MCF 10A (cell line): ENCODE measurements at regions of chr22 and their contacts with region 1.

Region 1: DNA sequence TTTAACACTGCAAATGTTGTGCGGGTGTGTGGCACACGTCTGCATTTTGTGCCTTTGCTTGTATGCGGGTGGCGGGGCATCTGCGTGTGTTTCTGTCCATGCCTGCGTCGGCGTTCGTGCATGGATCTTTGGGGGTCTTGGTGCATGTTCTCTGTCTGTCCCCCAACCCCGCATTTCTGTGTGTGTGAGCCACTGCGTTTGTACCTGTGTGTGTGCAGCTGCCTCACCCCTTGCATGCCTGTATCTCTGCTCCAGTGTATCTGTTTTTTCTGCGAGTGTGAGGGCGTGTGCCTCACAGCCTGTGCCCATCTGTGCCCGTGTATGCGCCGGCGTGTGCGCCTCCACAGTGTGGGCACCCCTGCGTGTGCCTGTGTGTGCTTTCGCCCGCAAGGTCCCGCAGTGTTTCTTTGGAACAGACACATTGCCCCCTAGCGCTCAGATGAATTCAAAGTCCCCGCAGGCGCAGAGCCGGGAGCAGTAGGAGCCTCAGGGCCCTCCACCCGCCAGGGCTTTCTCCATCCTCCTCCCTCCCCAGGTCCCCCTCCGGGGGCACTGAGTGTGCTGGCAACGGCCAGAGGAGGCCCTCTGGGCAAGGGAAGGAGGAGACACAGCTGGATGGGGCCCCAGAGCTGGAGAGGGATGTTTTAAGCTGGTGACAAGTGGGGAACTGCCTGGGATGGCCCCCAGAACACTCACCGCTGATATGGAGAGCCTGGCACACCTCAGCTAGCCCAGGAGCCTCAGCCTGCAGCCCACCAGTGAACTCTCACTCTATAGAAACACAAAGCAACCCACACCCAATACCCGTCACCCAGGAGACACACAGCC is 3.1 kb upstream of the MN1 start:
- DNase-seq: peak; percentile 51
- H3K4me3 Mint-ChIP-seq: no peak overlapping the region
- H3K27ac Mint-ChIP-seq: no peak overlapping the region
- H3K4me1 Mint-ChIP-seq: peaks cover 11% of the 10 kb centered on the region
- H3K27me3 Mint-ChIP-seq: no peaks in the 10 kb centered on the region
- CTCF ChIP-seq: peak; percentile 28

Region 2: DNA sequence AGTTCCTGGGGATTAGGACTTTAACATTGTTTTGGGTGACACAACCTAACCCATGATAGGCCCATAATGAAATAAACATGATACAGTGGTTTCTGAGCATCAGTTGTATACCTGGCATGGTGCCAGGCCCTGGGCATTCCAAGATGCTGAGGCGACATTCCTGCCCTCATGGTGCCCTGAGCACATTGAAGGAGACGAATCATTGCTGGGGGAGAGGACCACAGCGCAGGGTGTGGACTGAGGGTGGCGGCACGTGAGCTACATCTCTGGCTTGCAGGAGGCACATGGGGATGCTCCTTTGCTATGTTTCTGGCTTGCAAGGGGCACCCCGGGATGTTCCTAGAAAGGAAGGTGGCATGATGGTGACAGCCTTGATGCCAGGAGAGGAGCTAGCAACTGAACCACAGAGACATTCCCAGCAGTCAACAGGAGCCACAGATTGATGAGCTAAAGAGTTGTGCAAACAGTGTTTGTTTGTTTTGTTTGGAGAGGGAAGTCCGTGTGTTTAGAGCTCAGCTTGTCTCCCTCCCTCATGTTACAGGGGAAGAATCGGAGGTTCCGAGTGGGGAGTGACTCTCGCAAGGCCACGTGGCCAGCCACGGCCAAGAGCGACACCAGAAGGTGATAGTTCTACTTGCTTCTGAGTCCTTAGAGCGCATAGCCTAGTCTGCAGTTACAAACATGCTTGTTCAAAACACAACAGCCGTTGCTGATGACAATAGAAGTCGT is 1040.9 kb before region 1 on chr22:
- CTCF ChIA-PET with region 1: no interaction called
- POLR2A ChIA-PET with region 1: no interaction called
- intact Hi-C with region 1: loop called (anchors 5 kb)
- DNase-seq: peak; percentile 26
- H3K4me3 Mint-ChIP-seq: no peak overlapping the region
- H3K27ac Mint-ChIP-seq: no peak overlapping the region
- H3K4me1 Mint-ChIP-seq: peaks cover 7% of the 10 kb centered on the region
- H3K27me3 Mint-ChIP-seq: no peaks in the 10 kb centered on the region
- CTCF ChIP-seq: no peak

Region 3: DNA sequence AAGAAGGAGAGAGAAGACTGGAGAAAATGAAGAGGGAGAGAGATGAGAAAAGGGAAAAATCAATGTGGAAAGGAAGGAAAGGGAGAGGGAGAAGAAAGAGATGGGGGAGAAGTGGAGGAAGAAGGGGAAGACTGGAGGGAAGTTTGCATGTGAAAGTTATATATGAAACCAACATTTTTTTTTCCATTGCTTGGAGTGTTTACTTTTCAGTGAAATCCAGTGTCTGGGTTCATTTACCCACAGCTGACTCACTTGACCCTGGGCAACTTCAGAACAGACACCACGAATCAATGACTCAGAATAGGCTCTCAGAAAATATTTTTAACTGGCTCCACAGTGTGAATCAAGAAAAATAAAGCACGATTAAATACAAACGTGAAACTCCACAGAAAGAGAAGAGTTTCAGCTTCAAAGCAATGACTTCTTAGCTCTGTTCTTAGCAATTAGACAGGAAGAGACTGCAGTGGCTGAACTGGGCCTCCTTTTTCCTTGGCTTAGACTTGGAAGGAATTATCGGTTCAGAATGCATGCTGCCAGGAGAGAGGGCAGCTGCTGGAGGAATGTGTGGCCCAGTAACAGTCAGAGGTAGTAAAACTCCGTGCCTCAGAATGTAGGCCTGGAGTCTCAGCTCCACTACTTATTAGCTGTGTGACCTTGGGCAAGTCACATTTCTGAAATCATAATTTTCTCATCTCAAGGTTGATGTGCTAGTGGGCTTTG is 909.8 kb before region 1 on chr22:
- CTCF ChIA-PET with region 1: no interaction called
- POLR2A ChIA-PET with region 1: no interaction called
- intact Hi-C with region 1: loop called (anchors 5 kb)
- DNase-seq: peak; percentile 81
- H3K4me3 Mint-ChIP-seq: peak overlapping the region; percentile 26
- H3K27ac Mint-ChIP-seq: peak overlapping the region; percentile 80
- H3K4me1 Mint-ChIP-seq: peaks cover 18% of the 10 kb centered on the region
- H3K27me3 Mint-ChIP-seq: peaks cover 23% of the 10 kb centered on the region
- CTCF ChIP-seq: no peak

Region 4: GRCh38 chr22:27512283-27512761 is 292.4 kb before region 1 on chr22:
- CTCF ChIA-PET with region 1: no interaction called
- POLR2A ChIA-PET with region 1: no interaction called
- intact Hi-C with region 1: loop called (anchors 10 kb)
- DNase-seq: peak; percentile 90
- H3K4me3 Mint-ChIP-seq: peak overlapping the region; percentile 9
- H3K27ac Mint-ChIP-seq: peak overlapping the region; percentile 74
- H3K4me1 Mint-ChIP-seq: peaks cover 40% of the 10 kb centered on the region
- H3K27me3 Mint-ChIP-seq: no peaks in the 10 kb centered on the region
- CTCF ChIP-seq: no peak

Region 5: GRCh38 chr22:27748751-27749191 is 55.9 kb before region 1 on chr22:
- CTCF ChIA-PET with region 1: interaction called, 3 read pairs
- POLR2A ChIA-PET with region 1: interaction called, 5 read pairs
- intact Hi-C with region 1: loop called (anchors 2 kb)
- DNase-seq: peak; percentile 82
- H3K4me3 Mint-ChIP-seq: peak overlapping the region; percentile 44
- H3K27ac Mint-ChIP-seq: peak overlapping the region; percentile 88
- H3K4me1 Mint-ChIP-seq: peaks cover 61% of the 10 kb centered on the region
- H3K27me3 Mint-ChIP-seq: no peaks in the 10 kb centered on the region
- CTCF ChIP-seq: no peak

Region 6: GRCh38 chr22:27825174-27825573 is 20.5 kb after region 1 on chr22:
- CTCF ChIA-PET with region 1: no interaction called
- POLR2A ChIA-PET with region 1: no interaction called
- intact Hi-C with region 1: no loop called
- DNase-seq: no peak
- H3K4me3 Mint-ChIP-seq: no peak overlapping the region
- H3K27ac Mint-ChIP-seq: no peak overlapping the region
- H3K4me1 Mint-ChIP-seq: no peaks in the 10 kb centered on the region
- H3K27me3 Mint-ChIP-seq: no peaks in the 10 kb centered on the region
- CTCF ChIP-seq: no peak

Region 7: DNA sequence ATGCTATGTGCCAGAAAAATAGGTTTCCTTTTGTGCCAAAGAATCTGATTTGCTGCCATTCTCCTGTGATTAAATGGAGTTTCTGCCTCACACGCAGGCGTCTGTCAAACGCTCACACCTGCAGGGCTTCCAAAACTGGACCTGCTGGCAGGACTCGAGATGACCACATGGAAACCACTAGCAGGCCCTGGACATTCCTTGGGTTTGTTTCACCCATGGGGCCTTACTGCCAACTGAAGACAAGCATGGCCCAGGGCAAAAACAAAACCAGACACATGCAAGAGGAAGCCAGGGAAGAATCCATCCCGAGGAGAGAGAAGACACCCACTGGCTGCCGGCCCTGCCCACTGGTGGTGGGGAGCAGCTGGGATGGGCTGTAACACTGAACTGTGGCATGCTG is 52.8 kb after region 1 on chr22:
- CTCF ChIA-PET with region 1: no interaction called
- POLR2A ChIA-PET with region 1: no interaction called
- intact Hi-C with region 1: no loop called
- DNase-seq: no peak
- H3K4me3 Mint-ChIP-seq: no peak overlapping the region
- H3K27ac Mint-ChIP-seq: peak overlapping the region; percentile 3
- H3K4me1 Mint-ChIP-seq: peaks cover 5% of the 10 kb centered on the region
- H3K27me3 Mint-ChIP-seq: no peaks in the 10 kb centered on the region
- CTCF ChIP-seq: no peak